SK-N-SH (cell line): ENCODE measurements at regions of chr5 and their contacts with region 1.

Region 1: DNA sequence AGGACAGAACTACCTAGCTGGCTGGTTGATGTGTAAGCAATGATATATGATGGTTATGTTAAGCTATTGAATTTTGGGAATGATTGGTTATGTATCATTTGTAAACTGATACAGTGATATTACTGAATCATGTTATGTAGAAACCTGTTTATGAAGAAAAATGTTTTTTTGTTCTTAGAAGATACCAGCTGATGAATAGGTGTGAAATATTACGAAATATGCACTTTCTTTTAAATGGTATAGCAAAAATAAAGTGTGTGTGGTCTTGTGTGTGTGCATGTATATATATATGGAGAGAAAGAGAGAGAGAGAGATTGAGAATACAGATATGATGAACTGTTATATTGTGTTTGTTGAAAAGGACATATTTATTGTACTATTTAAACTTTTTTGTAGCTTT is 164.1 kb downstream of the WDR70 start:
- DNase-seq: no peak
- H3K4me3 ChIP-seq: no peak overlapping the region
- H3K27ac ChIP-seq: no peak overlapping the region
- H3K4me1 ChIP-seq: no peaks in the 10 kb centered on the region; a peak in 1 of 4 replicates
- H3K27me3 ChIP-seq: no peaks in the 10 kb centered on the region
- CTCF ChIP-seq: no peak
- EP300 ChIP-seq: no peak
- RAD21 ChIP-seq: no peak

Region 2: DNA sequence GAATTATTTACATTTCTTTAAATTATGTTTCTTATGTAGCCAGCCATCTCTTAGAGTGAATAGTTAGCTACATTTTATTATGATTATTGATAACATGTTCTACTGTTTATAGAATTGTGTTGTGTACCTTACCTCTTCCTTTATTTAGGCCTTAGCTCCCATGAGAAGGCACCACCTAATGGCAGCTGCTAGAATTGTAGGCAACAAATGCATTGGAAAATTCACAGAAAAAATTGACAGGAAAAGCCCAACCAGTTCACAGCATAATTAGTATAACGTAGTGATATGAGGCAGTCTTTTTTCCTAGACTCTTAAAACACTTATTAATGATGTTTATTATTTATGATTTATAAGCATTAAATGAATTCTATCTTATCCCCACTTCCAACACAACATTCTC is 11.7 kb after region 1 on chr5:
- CTCF ChIA-PET with region 1: interaction called, 11 read pairs
- POLR2A ChIA-PET with region 1: no interaction called
- DNase-seq: peak; percentile 14
- H3K4me3 ChIP-seq: no peak overlapping the region
- H3K27ac ChIP-seq: no peak overlapping the region
- H3K4me1 ChIP-seq: peaks cover 0 to 4% of the 10 kb centered on the region in 2 experiments; a peak in 1 of 4 replicates
- H3K27me3 ChIP-seq: no peaks in the 10 kb centered on the region
- CTCF ChIP-seq: peak; percentile 45; the same call in 1 of the 2 replicates
- EP300 ChIP-seq: no peak
- RAD21 ChIP-seq: peak; percentile 35; the same call in 1 of the 2 replicates